ENCODE measurements at regions of chr2 and their contacts with region 1.

Region 1: DNA sequence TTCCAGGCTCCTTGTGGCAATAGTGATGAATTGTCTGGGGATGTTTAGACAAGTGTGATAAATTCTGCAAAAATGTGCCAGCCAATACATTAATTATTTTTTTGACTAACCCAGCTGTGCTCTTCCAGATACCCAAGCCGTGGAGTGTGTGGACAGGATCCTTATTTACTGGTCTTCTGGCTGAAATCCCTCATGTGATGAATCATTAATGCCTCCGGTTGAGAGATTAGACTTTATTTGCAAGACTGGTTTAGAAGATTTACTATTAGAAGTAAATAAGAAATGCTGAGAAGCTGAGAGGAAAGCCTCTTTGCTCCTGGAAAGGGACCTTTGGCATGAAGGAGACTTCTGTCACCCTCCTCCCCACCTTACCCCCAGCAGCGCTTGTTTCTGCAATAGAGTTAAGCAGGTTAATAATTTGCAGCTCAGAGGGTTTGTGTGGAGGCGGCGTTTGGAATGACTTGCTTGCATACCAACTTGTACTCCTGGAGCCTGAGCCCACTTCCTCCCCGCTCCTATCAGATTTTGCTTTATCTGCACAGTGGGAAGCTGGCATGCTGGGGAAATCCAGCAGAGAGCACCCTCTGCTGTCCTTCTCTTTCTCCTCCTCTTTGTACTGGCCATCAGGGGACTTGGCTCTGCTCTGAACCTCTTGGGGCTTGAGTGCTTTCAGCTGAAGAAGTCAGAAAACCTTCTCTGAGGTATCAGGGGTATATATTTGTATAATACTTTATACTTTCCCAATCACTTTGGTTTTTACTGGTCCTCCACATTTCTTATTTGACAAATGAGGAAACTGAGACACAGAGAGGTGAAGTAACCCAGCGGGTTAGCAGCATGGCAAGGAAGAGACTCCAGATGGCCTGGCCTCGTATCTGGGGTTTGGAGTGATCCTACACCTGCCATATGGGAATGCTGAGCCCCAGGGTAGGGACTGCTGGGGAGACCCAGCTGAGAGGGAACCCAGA is 16.3 kb downstream of the SLC3A1 start:
- DNase-seq: peak; percentile 93
- H3K4me3 Mint-ChIP-seq: peak overlapping the region; percentile 43
- H3K27ac Mint-ChIP-seq: peak overlapping the region; percentile 96
- H3K4me1 Mint-ChIP-seq: peaks cover 53% of the 10 kb centered on the region
- H3K27me3 Mint-ChIP-seq: no peaks in the 10 kb centered on the region
- CTCF ChIP-seq: peak; percentile 82

Region 2: GRCh38 chr2:44044281-44044720 is 247.3 kb before region 1 on chr2:
- CTCF ChIA-PET with region 1: interaction called, 20 read pairs
- intact Hi-C with region 1: loop called (anchors 1 kb)
- DNase-seq: peak; percentile 90
- H3K4me3 Mint-ChIP-seq: no peak overlapping the region
- H3K27ac Mint-ChIP-seq: no peak overlapping the region
- H3K4me1 Mint-ChIP-seq: no peaks in the 10 kb centered on the region
- H3K27me3 Mint-ChIP-seq: no peaks in the 10 kb centered on the region
- CTCF ChIP-seq: peak; percentile 86

Region 3: DNA sequence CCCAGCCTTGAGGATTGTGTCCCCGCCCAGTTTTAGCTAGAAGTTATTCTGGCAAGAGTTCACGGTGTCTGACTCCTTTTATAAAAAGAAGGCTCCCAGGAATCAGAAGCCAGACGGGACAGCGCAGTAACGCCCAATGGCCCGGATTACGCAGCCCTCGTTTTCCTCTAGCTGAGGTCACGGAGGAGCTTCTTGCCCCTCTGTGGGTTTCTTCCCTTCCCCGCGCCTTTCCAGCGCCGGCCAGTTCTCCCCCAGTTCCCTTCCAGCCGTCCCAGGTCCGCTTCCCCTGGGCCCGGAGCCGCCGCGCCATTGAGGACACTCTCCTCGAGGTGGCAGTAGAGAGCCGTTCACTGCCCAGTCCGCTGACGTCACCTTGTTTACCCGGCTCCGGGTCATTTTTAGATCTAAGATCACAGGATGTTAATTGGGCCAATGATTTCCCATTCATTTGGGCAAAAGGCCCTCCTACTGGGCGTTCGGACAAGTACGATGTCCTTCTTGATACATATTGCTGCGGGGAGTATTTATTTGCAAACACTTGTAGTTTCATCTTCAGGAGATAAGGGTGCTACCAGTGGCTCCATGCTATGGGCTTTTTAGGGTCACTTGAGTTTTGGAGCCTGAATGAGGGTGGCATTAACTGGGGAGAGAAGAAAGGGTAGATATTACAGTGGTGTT is 204.4 kb before region 1 on chr2:
- CTCF ChIA-PET with region 1: interaction called, 7 read pairs
- intact Hi-C with region 1: loop called (anchors 1 kb)
- DNase-seq: peak; percentile 90
- H3K4me3 Mint-ChIP-seq: peak overlapping the region; percentile 68
- H3K27ac Mint-ChIP-seq: peak overlapping the region; percentile 75
- H3K4me1 Mint-ChIP-seq: peaks cover 65% of the 10 kb centered on the region
- H3K27me3 Mint-ChIP-seq: no peaks in the 10 kb centered on the region
- CTCF ChIP-seq: peak; percentile 89

Region 4: GRCh38 chr2:44167940-44168680 is 123.5 kb before region 1 on chr2:
- CTCF ChIA-PET with region 1: interaction called, 5 read pairs
- intact Hi-C with region 1: loop called (anchors 2 kb)
- DNase-seq: peak; percentile 97
- H3K4me3 Mint-ChIP-seq: peak overlapping the region; percentile 86
- H3K27ac Mint-ChIP-seq: peak overlapping the region; percentile 89
- H3K4me1 Mint-ChIP-seq: peaks cover 8% of the 10 kb centered on the region
- H3K27me3 Mint-ChIP-seq: no peaks in the 10 kb centered on the region
- CTCF ChIP-seq: no peak

Region 5: GRCh38 chr2:44267796-44268648 is 23.5 kb before region 1 on chr2:
- CTCF ChIA-PET with region 1: interaction called, 17 read pairs
- intact Hi-C with region 1: no loop called
- DNase-seq: peak; percentile 32
- H3K4me3 Mint-ChIP-seq: no peak overlapping the region
- H3K27ac Mint-ChIP-seq: peak overlapping the region; percentile 41
- H3K4me1 Mint-ChIP-seq: peaks cover 46% of the 10 kb centered on the region
- H3K27me3 Mint-ChIP-seq: no peaks in the 10 kb centered on the region
- CTCF ChIP-seq: no peak

Region 6: DNA sequence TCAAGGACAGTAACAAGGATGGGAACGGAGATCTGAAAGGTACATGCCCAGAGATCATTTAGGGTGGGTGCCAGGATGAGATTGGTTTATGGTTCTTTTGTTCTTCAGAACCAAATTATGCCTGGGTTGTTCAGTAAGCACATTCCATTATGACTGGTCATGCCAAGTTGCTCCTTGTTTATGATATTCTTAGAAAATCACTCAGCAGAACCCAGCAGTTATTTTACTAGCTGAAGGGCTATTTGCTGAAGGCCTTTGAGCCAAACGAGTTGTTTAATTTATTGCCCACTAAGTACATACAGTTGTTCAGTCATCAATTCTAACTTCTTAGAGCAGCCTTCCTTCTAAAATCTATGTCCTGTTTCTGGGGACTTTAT is 15.7 kb before region 1 on chr2:
- CTCF ChIA-PET with region 1: interaction called, 17 read pairs
- intact Hi-C with region 1: loop called (anchors 2 kb)
- DNase-seq: no peak
- H3K4me3 Mint-ChIP-seq: peak overlapping the region; percentile 65
- H3K27ac Mint-ChIP-seq: peak overlapping the region; percentile 22
- H3K4me1 Mint-ChIP-seq: peaks cover 49% of the 10 kb centered on the region
- H3K27me3 Mint-ChIP-seq: no peaks in the 10 kb centered on the region
- CTCF ChIP-seq: no peak